Right lobe of liver (tissue), 6 donors: ENCODE measurements at regions of chr20 and their contacts with region 1.

Region 1: GRCh38 chr20:16517946-16518783 is 55.1 kb downstream of the KIF16B start:
- DNase-seq: no peak
- ATAC-seq: peak; percentile 84 to 92 (median 88)
- H3K4me3 ChIP-seq: no peak overlapping the region
- H3K27ac ChIP-seq: no peak overlapping the region
- H3K4me1 ChIP-seq: no peaks in the 10 kb centered on the region
- H3K27me3 ChIP-seq: no peaks in the 10 kb centered on the region
- CTCF ChIP-seq: peak; percentile 58 to 69 (median 65)
- POLR2A ChIP-seq: no peak

Region 2: GRCh38 chr20:16639027-16639941 is 121.1 kb after region 1 on chr20:
- intact Hi-C with region 1: loop called in 1 of 2 experiments (anchors 5 kb)
- DNase-seq: no peak
- ATAC-seq: no peak
- H3K4me3 ChIP-seq: no peak overlapping the region
- H3K27ac ChIP-seq: no peak overlapping the region
- H3K4me1 ChIP-seq: no peaks in the 10 kb centered on the region
- H3K27me3 ChIP-seq: no peaks in the 10 kb centered on the region
- CTCF ChIP-seq: no peak
- POLR2A ChIP-seq: no peak

Region 3: GRCh38 chr20:16653266-16653665 is 135.1 kb after region 1 on chr20:
- intact Hi-C with region 1: no loop called
- DNase-seq: no peak
- ATAC-seq: no peak
- H3K4me3 ChIP-seq: no peak overlapping the region
- H3K27ac ChIP-seq: no peak overlapping the region
- H3K4me1 ChIP-seq: no peaks in the 10 kb centered on the region
- H3K27me3 ChIP-seq: no peaks in the 10 kb centered on the region
- CTCF ChIP-seq: no peak
- POLR2A ChIP-seq: no peak